Head of caudate nucleus (tissue), 42 donors: ENCODE measurements at regions of chr22 and their contacts with region 1.

Region 1: DNA sequence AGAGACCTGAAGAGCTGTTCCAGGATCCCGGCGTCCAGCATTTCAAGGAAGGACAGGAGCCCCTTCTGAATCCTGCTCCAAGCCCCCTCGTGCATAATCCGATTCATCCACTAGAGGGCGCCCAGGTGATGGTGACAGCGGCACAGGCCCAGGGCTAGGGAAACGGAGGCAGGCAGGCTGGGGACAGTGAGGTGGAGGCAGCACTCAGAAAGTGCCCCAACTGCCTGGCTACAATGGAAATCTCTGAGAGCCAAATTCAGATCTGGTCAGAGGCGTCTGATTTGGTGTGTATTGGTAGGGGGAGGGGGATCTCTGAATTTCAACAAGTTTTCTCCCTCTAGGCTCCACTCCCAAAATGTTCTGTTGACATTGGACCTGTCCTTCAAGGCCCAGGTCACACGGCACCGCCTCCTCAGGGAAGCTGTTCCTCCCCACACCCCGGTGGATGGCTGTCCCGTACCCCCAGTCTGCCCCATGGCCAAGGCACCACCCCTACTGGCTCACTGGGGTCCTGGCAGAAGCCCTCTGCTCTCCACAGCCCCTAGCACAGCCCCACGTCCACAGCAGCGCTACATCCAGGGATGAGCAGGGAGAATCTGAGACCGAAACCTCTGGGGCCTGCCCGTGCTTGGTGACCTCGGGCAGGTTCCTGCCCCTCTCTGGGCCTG is 142.9 kb downstream of the CRYBB2 start:
- DNase-seq: peak; percentile 28 to 89 (median 68)

Region 2: DNA sequence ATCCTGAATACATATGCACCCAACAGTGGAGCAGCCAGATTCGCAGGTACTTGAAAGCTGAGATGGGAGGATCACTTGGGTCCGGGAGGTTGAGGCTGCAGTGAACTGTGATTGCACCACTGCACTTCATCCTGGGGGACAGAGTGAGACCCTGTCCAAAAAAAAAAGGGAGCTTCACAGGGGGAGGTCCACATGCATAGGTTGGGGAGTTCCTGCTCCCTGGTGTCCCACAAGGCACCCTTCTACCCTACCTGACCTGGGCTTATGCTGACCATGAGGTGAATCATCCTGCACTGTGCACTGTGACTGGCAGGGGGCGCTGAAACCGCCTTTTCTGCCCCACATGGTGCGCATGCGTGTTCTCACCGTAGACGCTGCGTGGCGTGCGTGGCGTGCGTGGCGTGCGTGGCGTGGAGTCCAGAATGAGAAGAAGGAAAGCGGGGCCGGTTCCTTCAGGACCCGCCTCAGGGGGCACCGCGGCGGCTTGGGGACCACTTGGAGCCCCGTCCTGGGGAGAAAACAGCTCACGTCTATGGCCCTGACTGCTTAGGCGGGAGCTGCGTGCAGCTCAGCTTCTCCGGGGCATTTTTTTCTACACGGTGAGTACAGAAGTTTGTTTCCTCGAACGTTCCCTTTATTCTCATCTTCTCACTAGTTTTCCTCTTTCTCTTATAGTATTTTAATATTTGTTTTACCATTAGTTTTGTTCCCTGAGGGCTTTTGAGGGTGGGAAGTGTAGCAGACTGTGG is 85.5 kb after region 1 on chr22:
- intact Hi-C with region 1: loop called (anchors 5 kb)
- DNase-seq: peak; percentile 77 to 96 (median 90)